ENCODE measurements at regions of chr3 and their contacts with region 1.

Region 1: DNA sequence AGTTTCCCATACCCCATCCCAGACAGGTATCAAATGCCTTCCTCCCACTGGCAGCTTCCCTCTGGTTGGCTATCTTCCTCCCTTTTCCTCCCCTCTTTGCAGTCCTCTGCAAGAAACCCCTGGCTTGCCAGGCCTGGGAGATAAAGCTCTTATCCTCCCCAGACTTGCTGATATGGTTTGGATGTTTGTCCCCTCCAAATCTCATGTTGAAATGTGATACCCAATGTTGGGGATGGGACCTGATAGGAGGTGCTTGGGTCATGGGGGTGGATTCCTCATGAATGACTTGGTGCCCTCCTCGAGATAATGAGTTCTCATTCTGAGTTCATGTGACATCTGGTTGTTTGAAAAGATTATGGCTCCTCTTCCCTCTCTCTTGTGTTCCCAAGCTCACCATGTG is 32.2 kb upstream of the SNRK start:
- DNase-seq: no peak
- ATAC-seq: no peak
- H3K4me3 ChIP-seq: no peak overlapping the region
- H3K4me3 Mint-ChIP-seq: no peak overlapping the region
- H3K27ac ChIP-seq: no peak overlapping the region
- H3K27ac Mint-ChIP-seq: no peak overlapping the region
- H3K4me1 ChIP-seq: peaks cover 25% of the 10 kb centered on the region
- H3K4me1 Mint-ChIP-seq: peaks cover 36% of the 10 kb centered on the region
- H3K27me3 ChIP-seq: no peaks in the 10 kb centered on the region
- H3K27me3 Mint-ChIP-seq: no peaks in the 10 kb centered on the region
- CTCF ChIP-seq: no peak

Region 2: DNA sequence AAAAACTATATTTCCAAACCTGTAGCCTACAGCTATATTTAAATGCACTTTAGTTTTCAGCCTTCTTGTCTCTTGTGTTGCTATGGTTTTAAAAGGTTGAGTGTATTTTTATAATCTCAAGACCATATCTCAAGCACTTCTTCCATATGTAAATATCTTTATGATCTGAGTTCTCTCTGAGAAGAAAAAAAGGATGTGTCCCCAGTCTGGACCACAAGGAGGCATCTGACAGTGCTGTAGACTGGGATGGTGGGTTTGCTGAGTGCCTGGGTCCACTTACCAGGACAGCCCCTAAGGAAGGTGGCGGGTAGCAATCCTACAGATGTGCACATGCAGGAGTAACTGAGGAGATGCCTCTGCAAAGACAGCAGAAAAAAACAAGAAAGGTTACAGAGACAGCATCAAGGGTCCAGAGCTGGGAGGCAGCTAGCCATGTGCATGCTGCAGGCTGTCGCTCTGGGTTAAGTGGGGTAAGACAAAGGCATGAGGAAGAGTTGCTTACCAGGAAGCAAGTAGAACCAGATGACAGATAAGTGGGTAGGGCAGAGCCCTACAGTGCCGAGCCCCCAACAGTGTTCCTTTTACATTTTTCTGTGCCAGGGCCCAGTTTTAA is 38.4 kb before region 1 on chr3:
- CTCF ChIA-PET with region 1: no interaction called
- POLR2A ChIA-PET with region 1: no interaction called
- intact Hi-C with region 1: loop called in 1 of 2 experiments (anchors 5 kb)
- DNase-seq: peak in 4 of 14 experiments; percentile 19 to 35 (median 28)
- ATAC-seq: peak; percentile 45
- H3K4me3 ChIP-seq: no peak overlapping the region
- H3K4me3 Mint-ChIP-seq: peak overlapping the region; percentile 26
- H3K27ac ChIP-seq: no peak overlapping the region
- H3K27ac Mint-ChIP-seq: peak overlapping the region; percentile 75
- H3K4me1 ChIP-seq: peaks cover 23% of the 10 kb centered on the region
- H3K4me1 Mint-ChIP-seq: peaks cover 54% of the 10 kb centered on the region
- H3K27me3 ChIP-seq: no peaks in the 10 kb centered on the region
- H3K27me3 Mint-ChIP-seq: no peaks in the 10 kb centered on the region
- CTCF ChIP-seq: no peak